OCI-LY7 (cell line): ENCODE measurements at regions of chr10 and their contacts with region 1.

Region 1: DNA sequence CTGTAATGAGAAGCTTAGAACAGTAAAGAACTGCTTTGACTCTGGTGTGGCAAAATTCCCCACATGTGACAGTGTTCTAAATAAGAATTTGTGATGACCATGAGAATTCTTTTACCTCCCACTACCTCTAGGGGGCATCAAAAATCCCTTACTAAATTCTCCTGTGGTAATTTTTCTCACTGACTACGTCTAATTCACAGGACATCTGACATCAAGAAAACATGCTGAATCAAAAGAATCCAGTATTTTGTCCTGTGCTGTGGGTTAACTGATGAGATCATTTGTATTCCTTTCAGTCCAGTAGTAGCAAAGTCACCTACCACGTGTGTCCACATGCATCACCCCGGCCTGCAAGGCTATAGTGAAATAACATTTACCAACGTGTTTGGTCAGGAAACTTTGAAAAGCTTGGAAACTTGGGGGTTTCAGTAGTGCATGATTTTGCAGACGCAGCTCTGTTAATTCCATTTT is 103.8 kb downstream of the ATE1 start:
- DNase-seq: peak; percentile 63
- H3K4me3 ChIP-seq: no peak overlapping the region
- H3K27ac ChIP-seq: no peak overlapping the region
- H3K4me1 ChIP-seq: no peaks in the 10 kb centered on the region
- CTCF ChIP-seq: peak; percentile 94

Region 2: DNA sequence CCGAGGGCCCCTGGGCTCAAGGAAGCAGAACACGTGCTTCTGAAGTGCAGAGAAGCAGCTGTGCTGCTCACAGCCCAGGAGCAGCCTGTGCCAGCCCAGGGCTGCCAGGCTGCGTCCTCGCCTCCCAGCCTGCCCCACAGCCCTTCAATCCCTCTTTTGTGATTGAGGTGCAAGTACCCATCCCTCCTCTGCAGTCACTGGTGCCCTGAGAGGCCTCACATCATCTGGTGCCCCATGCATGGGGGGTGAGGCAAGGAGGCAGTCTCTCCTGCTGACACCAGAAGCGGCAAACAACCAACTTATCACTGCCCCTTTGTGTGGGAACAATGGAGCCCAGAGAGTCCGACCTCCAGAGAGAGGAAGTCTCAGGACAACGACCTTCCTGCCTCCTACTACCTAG is 176.0 kb before region 1 on chr10:
- CTCF ChIA-PET with region 1: no interaction called
- POLR2A ChIA-PET with region 1: no interaction called
- intact Hi-C with region 1: no loop called
- DNase-seq: no peak
- H3K4me3 ChIP-seq: no peak overlapping the region
- H3K27ac ChIP-seq: no peak overlapping the region
- H3K4me1 ChIP-seq: no peaks in the 10 kb centered on the region
- CTCF ChIP-seq: no peak

Region 3: GRCh38 chr10:121886997-121887622 is 63.1 kb after region 1 on chr10:
- CTCF ChIA-PET with region 1: interaction called, 3 read pairs
- POLR2A ChIA-PET with region 1: no interaction called
- intact Hi-C with region 1: loop called (anchors 1 kb)
- DNase-seq: peak; percentile 67
- H3K4me3 ChIP-seq: no peak overlapping the region
- H3K27ac ChIP-seq: no peak overlapping the region
- H3K4me1 ChIP-seq: no peaks in the 10 kb centered on the region
- CTCF ChIP-seq: peak; percentile 92